ENCODE measurements at regions of chr5 and their contacts with region 1.

Region 1: DNA sequence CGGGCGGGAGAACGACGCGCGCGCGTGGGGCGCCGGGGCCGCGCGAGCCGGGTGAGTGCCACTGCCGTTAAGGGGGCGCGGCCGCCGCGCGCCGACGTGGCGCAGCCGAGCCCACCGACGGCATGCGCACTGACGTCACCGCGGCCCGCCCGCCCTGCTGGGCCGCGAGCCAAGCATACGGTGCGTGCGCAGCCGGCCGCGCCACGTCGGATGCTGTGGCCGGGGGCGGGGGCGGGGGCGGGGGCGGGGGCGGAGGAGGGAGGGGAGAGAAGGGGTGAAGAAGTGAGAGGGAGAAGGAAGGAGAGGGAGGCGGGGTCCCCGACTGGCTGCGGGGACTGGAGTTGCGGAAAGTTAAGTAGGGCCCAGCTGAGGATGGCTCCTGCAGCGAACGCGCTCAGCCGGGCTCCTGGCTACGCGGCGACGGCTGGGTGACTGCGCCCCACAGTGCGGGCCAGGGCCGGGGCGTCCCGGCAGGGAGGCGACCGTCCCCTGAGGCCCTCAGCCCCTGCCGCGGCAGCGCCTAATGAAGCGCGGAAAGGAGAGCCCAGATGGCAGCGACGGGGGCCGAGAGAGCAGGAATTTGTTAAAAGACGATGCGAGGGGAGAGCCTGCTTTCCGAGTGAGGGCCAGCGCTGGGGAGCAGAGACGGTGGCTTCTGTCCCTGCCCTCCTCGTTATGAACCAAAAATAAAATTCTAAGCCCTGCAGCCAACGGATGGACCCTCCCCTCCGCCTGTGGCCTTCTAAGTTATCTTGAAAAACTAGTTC is at the start of gene DAP:
- DNase-seq: peak; percentile 60 to 99
- H3K4me3 ChIP-seq: peak within 1 kb of the TSS; percentile 85
- H3K27ac ChIP-seq: peak within 1 kb of the TSS; percentile 80
- H3K4me1 ChIP-seq: peaks cover 36% of the 10 kb centered on the region
- H3K27me3 ChIP-seq: no peaks in the 10 kb centered on the region
- CTCF ChIP-seq: no peak
- total RNA-seq, gene DAP: 256 and 279 TPM in 2 replicates

Region 2: GRCh38 chr5:10607023-10607665 is 154.2 kb before region 1 on chr5:
- CTCF ChIA-PET with region 1: no interaction called
- POLR2A ChIA-PET with region 1: interaction called, 17 read pairs
- intact Hi-C with region 1: no loop called
- DNase-seq: no peak
- H3K4me3 ChIP-seq: no peak overlapping the region
- H3K27ac ChIP-seq: no peak overlapping the region
- H3K4me1 ChIP-seq: peaks cover 3% of the 10 kb centered on the region
- H3K27me3 ChIP-seq: no peaks in the 10 kb centered on the region
- CTCF ChIP-seq: no peak

Region 3: GRCh38 chr5:10632110-10632761 is 129.1 kb before region 1 on chr5:
- CTCF ChIA-PET with region 1: no interaction called
- POLR2A ChIA-PET with region 1: no interaction called
- intact Hi-C with region 1: loop called (anchors 1 kb)
- DNase-seq: peak in 1 of 2 experiments; percentile 85
- H3K4me3 ChIP-seq: no peak overlapping the region
- H3K27ac ChIP-seq: no peak overlapping the region
- H3K4me1 ChIP-seq: peaks cover 5% of the 10 kb centered on the region; the same call in 1 of the 2 replicates
- H3K27me3 ChIP-seq: no peaks in the 10 kb centered on the region
- CTCF ChIP-seq: no peak

Region 4: DNA sequence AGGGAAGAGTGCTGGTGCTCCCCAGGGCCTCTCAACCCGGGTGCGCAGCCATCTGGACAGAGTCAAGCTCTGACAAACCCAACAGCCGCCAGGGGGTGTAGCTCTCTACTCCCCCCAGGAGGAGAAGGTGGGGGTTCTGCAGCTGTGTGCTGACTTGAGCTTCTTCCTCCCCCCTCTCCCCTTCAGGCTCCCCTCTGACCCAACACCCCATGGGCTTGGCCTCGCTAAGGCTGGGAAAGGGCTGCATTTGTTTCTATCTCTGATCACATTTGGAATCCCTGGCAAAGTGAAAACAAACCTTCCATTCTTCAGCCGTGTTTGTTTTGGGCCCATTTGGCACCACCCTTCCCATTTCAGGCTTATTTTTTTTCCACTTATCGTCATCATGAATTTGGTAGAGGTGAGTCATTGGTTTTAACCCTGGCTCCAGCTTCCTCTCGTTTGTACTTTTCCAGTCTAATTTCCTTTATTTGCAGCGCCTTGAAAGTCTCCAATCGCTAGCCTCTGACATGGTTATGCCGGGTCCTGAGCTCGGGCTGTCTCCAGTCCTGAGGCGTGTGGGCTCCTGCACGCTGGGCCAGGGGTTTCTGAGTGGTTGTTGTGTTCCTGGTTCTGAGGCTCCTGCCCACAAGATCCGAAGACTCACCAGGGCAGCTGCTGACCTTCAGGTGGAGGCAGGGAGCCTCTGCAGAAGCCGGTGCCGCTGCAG is 36.4 kb before region 1 on chr5:
- CTCF ChIA-PET with region 1: no interaction called
- POLR2A ChIA-PET with region 1: interaction called, 13 read pairs
- intact Hi-C with region 1: loop called (anchors 1 kb)
- DNase-seq: peak; percentile 86 to 97
- H3K4me3 ChIP-seq: peak overlapping the region; percentile 43; the same call in 1 of the 2 replicates
- H3K27ac ChIP-seq: peak overlapping the region; percentile 91
- H3K4me1 ChIP-seq: peaks cover 78% of the 10 kb centered on the region
- H3K27me3 ChIP-seq: no peaks in the 10 kb centered on the region
- CTCF ChIP-seq: peak; percentile 69

Region 5: DNA sequence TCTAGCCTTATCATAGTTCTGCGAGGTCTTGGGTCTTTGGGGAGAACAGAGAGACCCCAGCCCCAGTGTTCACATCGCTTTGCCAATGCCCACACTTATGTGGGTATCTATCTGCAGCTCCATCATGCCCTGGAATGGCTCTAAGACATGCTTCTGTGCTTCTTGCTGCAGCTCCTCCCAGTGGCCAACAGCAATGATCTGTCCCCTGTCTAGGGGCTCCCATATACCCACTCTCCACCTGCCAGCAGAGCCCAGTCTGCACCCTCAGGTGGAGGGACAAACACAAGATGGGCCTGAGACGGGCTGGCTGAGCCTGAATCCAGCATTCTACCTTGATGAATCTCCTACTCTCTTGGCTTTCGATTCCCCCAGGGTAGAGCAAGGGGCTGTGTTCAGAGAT is 14.3 kb after region 1 on chr5:
- CTCF ChIA-PET with region 1: no interaction called
- POLR2A ChIA-PET with region 1: no interaction called
- intact Hi-C with region 1: no loop called
- DNase-seq: no peak
- H3K4me3 ChIP-seq: no peak overlapping the region
- H3K27ac ChIP-seq: no peak overlapping the region
- H3K4me1 ChIP-seq: no peaks in the 10 kb centered on the region
- H3K27me3 ChIP-seq: no peaks in the 10 kb centered on the region
- CTCF ChIP-seq: no peak

Region 6: DNA sequence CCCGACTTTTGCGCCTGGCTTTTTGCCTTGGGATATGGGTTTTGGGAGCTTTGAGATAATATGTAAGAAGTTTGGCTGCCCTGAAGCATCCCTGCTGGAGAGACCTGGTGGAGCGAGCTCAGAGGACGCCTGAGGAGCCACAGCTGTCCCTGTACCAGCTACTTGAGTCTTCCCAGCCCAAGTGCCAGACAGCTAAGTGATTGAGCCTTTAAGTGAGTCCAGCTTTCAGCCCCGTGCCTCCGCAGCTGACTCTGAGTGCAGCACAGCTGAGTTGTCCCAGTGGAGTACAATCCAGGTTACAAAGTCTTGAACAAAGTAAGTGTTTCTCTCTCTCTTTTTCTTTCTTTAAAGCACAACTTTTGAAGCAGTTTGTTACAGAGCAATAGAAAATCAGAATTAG is 203.5 kb after region 1 on chr5:
- CTCF ChIA-PET with region 1: interaction called, 3 read pairs
- POLR2A ChIA-PET with region 1: no interaction called
- intact Hi-C with region 1: loop called (anchors 5 kb)
- DNase-seq: no peak
- H3K4me3 ChIP-seq: no peak overlapping the region
- H3K27ac ChIP-seq: no peak overlapping the region
- H3K4me1 ChIP-seq: peaks cover 5% of the 10 kb centered on the region; the same call in 1 of the 2 replicates
- H3K27me3 ChIP-seq: no peaks in the 10 kb centered on the region
- CTCF ChIP-seq: no peak

Measured in PC-9 (cell line).